ENCODE measurements at regions of chr10 and their contacts with region 1.

Region 1: GRCh38 chr10:69629897-69630650 is at the start of gene FAM241B:
- DNase-seq: peak; percentile 39
- ATAC-seq: peak; percentile 69
- H3K4me3 Mint-ChIP-seq: no peak within 1 kb of the TSS
- H3K27ac Mint-ChIP-seq: no peak within 1 kb of the TSS
- H3K4me1 Mint-ChIP-seq: no peaks in the 10 kb centered on the region
- H3K27me3 Mint-ChIP-seq: peaks cover 24% of the 10 kb centered on the region
- CTCF ChIP-seq: no peak
- total RNA-seq, gene FAM241B: 1.00 and 1.8 TPM in 2 replicates

Region 2: GRCh38 chr10:69573056-69573806 is 56.8 kb before region 1 on chr10 and contains the start of gene NEUROG3:
- CTCF ChIA-PET with region 1: no interaction called
- POLR2A ChIA-PET with region 1: no interaction called
- intact Hi-C with region 1: loop called (anchors 5 kb)
- DNase-seq: peak; percentile 33
- ATAC-seq: peak; percentile 76
- H3K4me3 Mint-ChIP-seq: peak within 1 kb of the TSS; percentile 80
- H3K27ac Mint-ChIP-seq: peak within 1 kb of the TSS; percentile 41
- H3K4me1 Mint-ChIP-seq: peaks cover 29% of the 10 kb centered on the region
- H3K27me3 Mint-ChIP-seq: peaks cover 70% of the 10 kb centered on the region
- CTCF ChIP-seq: no peak
- total RNA-seq, gene NEUROG3: 0.38 and 0.66 TPM in 2 replicates

Region 3: DNA sequence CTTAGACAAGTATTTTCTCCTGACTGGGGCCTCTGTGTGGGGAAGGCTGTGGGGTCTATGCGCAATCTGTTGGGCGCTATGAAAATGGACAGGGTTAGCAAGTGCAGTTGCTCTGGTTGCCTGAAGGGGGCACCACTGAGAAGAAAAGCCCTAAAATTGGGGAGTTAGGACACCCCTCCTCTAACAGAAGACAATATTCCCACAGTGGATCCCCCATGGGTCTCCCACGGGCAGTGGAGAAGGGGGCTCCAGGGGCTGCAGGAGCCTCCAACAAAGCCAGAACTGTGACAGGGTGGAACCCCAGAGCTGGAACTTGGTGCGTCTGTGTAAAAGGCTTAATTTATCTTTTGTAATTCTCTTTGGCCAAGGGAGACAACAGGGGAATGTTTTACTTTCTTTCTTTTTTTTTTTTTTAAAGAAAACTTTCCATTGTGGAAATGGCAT is 159.1 kb after region 1 on chr10:
- CTCF ChIA-PET with region 1: no interaction called
- POLR2A ChIA-PET with region 1: no interaction called
- intact Hi-C with region 1: no loop called
- DNase-seq: no peak
- ATAC-seq: no peak
- H3K4me3 Mint-ChIP-seq: no peak overlapping the region
- H3K27ac Mint-ChIP-seq: no peak overlapping the region
- H3K4me1 Mint-ChIP-seq: no peaks in the 10 kb centered on the region
- H3K27me3 Mint-ChIP-seq: peaks cover 13% of the 10 kb centered on the region
- CTCF ChIP-seq: no peak

Region 4: GRCh38 chr10:69988094-69988493 is 358.0 kb after region 1 on chr10:
- CTCF ChIA-PET with region 1: no interaction called
- POLR2A ChIA-PET with region 1: no interaction called
- intact Hi-C with region 1: no loop called
- DNase-seq: no peak
- ATAC-seq: no peak
- H3K4me3 Mint-ChIP-seq: no peak overlapping the region
- H3K27ac Mint-ChIP-seq: no peak overlapping the region
- H3K4me1 Mint-ChIP-seq: no peaks in the 10 kb centered on the region
- H3K27me3 Mint-ChIP-seq: peaks cover 14% of the 10 kb centered on the region
- CTCF ChIP-seq: no peak

Measured in activated B cell treated with CpG ODN at 0.5 μM for 24 hours (primary cell).